H1 (cell line): ENCODE measurements at regions of chr13 and their contacts with region 1.

Region 1: GRCh38 chr13:100514788-100515409 is 73.7 kb downstream of the GGACT start:
- DNase-seq: peak in 1 of 2 experiments; percentile 92
- H3K4me3 ChIP-seq: no peak overlapping the region
- H3K27ac ChIP-seq: no peak overlapping the region
- H3K4me1 ChIP-seq: peaks cover 0 to 22% (median 20%) of the 10 kb centered on the region in 4 experiments; a peak in 6 of 7 replicates
- H3K27me3 ChIP-seq: no peaks in the 10 kb centered on the region
- CTCF ChIP-seq: peak; percentile 94 to 97 (median 94)
- EP300 ChIP-seq: no peak
- POLR2A ChIP-seq: no peak
- RAD21 ChIP-seq: peak; percentile 99 to 100

Region 2: GRCh38 chr13:100063333-100063732 is 451.6 kb before region 1 on chr13:
- CTCF ChIA-PET with region 1: no interaction called
- POLR2A ChIA-PET with region 1: no interaction called
- DNase-seq: no peak
- H3K4me3 ChIP-seq: no peak overlapping the region
- H3K27ac ChIP-seq: no peak overlapping the region
- H3K4me1 ChIP-seq: peaks cover 0 to 2% (median under 1%) of the 10 kb centered on the region in 4 experiments; a peak in 4 of 7 replicates
- H3K27me3 ChIP-seq: no peaks in the 10 kb centered on the region
- CTCF ChIP-seq: no peak
- EP300 ChIP-seq: no peak
- POLR2A ChIP-seq: no peak
- RAD21 ChIP-seq: no peak

Region 3: DNA sequence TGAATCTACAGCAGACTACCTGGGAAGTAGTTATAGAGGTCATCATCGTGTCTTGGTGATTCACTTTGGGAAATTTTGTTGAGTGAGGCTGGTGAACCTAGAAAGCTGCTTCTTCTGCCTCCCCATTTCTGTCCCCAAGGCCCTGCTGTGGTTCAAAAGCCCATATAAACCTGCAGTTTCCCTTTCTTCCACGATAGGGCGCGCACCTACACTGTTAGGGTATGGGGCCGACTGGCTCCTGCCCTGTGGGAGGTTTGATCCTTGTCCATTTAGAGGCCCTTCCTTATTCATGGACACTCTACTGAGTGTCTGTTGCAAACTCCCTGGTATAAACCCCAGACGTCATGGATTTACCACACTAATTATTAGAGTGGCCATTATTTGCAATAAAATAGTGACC is 118.1 kb before region 1 on chr13:
- CTCF ChIA-PET with region 1: interaction called, 19 read pairs
- POLR2A ChIA-PET with region 1: no interaction called
- DNase-seq: no peak
- H3K4me3 ChIP-seq: no peak overlapping the region
- H3K27ac ChIP-seq: no peak overlapping the region
- H3K4me1 ChIP-seq: peaks cover 0 to 3% (median 1%) of the 10 kb centered on the region in 4 experiments; a peak in 4 of 7 replicates
- H3K27me3 ChIP-seq: no peaks in the 10 kb centered on the region
- CTCF ChIP-seq: peak; percentile 42 to 63 (median 46)
- EP300 ChIP-seq: no peak
- POLR2A ChIP-seq: no peak
- RAD21 ChIP-seq: peak; percentile 71 to 80

Region 4: GRCh38 chr13:100440751-100441425 is 74.0 kb before region 1 on chr13:
- CTCF ChIA-PET with region 1: interaction called, 12 read pairs
- POLR2A ChIA-PET with region 1: interaction called, 5 read pairs
- DNase-seq: no peak
- H3K4me3 ChIP-seq: no peak overlapping the region
- H3K27ac ChIP-seq: no peak overlapping the region
- H3K4me1 ChIP-seq: peaks cover 3 to 16% (median 13%) of the 10 kb centered on the region in 4 experiments; a peak in 5 of 7 replicates
- H3K27me3 ChIP-seq: no peaks in the 10 kb centered on the region
- CTCF ChIP-seq: no peak
- EP300 ChIP-seq: no peak
- POLR2A ChIP-seq: no peak
- RAD21 ChIP-seq: no peak

Region 5: DNA sequence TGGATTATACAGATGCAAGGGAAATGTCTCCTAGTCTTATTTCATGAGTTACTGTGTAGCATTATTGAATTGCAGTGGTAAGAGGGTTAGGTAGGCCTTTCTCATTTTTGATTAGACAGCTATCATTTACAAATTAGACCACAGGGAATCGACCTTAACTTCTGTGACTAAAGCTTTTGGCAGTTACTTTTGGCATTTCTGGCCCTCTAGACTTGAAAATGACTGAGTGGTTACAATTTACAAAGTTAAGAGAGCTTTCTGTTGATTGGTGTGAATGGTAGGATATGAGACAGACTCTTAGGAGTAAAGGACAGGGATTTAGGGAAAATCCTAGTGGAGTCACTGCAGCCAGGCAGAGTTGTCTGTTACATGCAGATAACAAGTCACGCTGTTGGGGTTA is 12.5 kb before region 1 on chr13:
- CTCF ChIA-PET with region 1: interaction called, 16 read pairs
- POLR2A ChIA-PET with region 1: interaction called, 8 read pairs
- DNase-seq: no peak
- H3K4me3 ChIP-seq: no peak overlapping the region
- H3K27ac ChIP-seq: no peak overlapping the region
- H3K4me1 ChIP-seq: peaks cover 2 to 8% (median 5%) of the 10 kb centered on the region in 4 experiments; a peak in 5 of 7 replicates
- H3K27me3 ChIP-seq: no peaks in the 10 kb centered on the region
- CTCF ChIP-seq: no peak
- EP300 ChIP-seq: no peak
- POLR2A ChIP-seq: no peak
- RAD21 ChIP-seq: no peak